ENCODE measurements at regions of chr6 and their contacts with region 1.

Region 1: GRCh38 chr6:105793130-105793529 is 293.0 kb upstream of the PRDM1 start:
- DNase-seq: peak; percentile 79 to 85 (median 80)
- H3K4me3 ChIP-seq: peak overlapping the region in 1 of 3 experiments; percentile 35
- H3K4me3 Mint-ChIP-seq: peak overlapping the region in 1 of 2 donors; percentile 70
- H3K27ac ChIP-seq: peak overlapping the region in 1 of 2 donors; percentile 66
- H3K27ac Mint-ChIP-seq: peak overlapping the region; percentile 34 to 89 (median 82)
- H3K4me1 ChIP-seq: peaks cover 43 to 49% of the 10 kb centered on the region in 2 donors
- H3K4me1 Mint-ChIP-seq: peaks cover 57% of the 10 kb centered on the region
- H3K27me3 ChIP-seq: no peaks in the 10 kb centered on the region
- H3K27me3 Mint-ChIP-seq: no peaks in the 10 kb centered on the region
- CTCF ChIP-seq: peak; percentile 72

Region 2: DNA sequence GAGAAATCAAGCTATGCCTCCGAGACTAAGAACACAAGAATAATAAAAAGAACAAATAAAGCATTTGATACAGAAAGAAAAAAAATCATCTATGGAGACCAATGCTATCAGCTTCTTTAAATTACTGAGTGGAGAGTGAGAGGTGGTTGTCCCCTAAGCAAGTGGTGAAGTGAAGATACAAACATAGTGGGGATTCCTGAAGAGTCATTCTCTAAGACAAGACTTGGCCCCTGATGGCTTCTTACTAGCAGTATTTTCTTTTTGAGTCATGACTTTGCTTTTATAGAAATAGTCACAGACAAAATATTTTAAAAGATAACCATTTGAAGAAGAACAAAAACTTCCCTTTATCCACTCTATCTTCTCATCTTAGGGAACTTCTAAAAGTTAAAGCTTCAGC is 31.6 kb after region 1 on chr6:
- intact Hi-C with region 1: no loop called
- DNase-seq: peak in 1 of 3 donors; percentile 31
- H3K4me3 ChIP-seq: no peak overlapping the region
- H3K4me3 Mint-ChIP-seq: no peak overlapping the region
- H3K27ac ChIP-seq: no peak overlapping the region
- H3K27ac Mint-ChIP-seq: peak overlapping the region in 4 of 7 donors; percentile 32 to 85 (median 58)
- H3K4me1 ChIP-seq: peaks cover 11 to 15% of the 10 kb centered on the region in 2 donors
- H3K4me1 Mint-ChIP-seq: peaks cover 12% of the 10 kb centered on the region
- H3K27me3 ChIP-seq: no peaks in the 10 kb centered on the region
- H3K27me3 Mint-ChIP-seq: no peaks in the 10 kb centered on the region
- CTCF ChIP-seq: no peak

Region 3: DNA sequence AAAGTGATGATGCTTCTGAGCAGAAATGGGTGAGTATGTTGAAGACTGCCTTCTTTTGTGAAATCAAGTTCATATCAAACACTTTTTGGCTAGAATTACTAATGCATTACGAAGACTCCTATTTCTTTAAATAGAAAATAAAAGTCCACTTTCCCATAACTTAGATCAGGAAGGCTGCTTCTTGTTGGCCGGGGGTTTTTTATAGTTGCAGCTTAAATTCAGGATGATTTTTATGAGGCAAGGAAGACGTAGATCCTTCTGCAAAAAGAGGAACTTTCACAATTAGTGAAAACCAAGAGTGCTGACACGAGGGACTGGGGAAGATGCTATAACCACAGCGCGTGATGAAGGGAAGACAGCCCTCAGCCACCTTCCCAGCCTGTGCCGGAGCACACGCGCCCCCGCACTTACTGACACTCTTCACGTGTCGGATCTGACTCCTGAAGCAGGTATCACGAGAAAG is 86.9 kb after region 1 on chr6:
- intact Hi-C with region 1: loop called in 1 of 2 experiments (anchors 5 kb)
- DNase-seq: peak; percentile 95 to 98 (median 96)
- H3K4me3 ChIP-seq: peak overlapping the region in 1 of 3 experiments; percentile 34
- H3K4me3 Mint-ChIP-seq: peak overlapping the region; percentile 54 to 75
- H3K27ac ChIP-seq: peak overlapping the region; percentile 75 to 95
- H3K27ac Mint-ChIP-seq: peak overlapping the region; percentile 90 to 99 (median 97)
- H3K4me1 ChIP-seq: peaks cover 49 to 59% of the 10 kb centered on the region in 2 donors
- H3K4me1 Mint-ChIP-seq: peaks cover 68% of the 10 kb centered on the region
- H3K27me3 ChIP-seq: no peaks in the 10 kb centered on the region
- H3K27me3 Mint-ChIP-seq: peaks cover 0 to 9% (median 0%) of the 10 kb centered on the region in 3 donors
- CTCF ChIP-seq: no peak

Region 4: DNA sequence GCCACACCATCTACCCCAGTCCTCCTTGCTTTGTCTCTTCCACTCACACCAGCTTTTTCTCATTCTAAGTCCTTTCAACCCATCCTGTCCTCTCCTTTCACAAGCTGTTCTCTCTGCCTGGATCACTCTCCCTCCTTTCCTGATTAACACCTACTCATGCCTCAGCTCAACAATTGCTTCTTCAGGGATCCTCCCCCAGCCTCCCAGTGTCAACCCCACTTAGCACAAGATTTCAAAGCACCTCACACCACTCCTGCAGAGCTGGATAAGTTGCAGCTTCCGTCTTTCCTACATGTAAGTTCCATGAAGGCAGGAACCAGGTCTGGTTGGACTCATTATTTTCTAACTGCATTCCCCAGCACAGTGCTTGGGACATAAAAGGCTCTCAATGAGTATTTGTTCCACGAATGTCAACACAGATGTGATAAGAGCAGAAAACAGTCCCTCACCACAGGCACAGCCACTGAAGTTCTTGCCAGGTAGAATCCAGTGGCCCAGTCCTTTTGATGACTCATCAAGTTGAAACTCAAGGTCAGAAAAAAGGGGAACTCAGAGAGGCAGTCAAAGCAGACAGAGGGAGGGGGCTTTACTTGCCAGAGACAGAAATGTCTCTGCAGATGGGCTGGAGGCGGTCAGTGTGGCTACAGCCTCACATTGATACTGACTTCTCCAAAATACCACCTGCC is 99.6 kb after region 1 on chr6:
- intact Hi-C with region 1: loop called in 1 of 2 experiments (anchors 10 kb)
- DNase-seq: peak; percentile 72 to 88 (median 80)
- H3K4me3 ChIP-seq: no peak overlapping the region
- H3K4me3 Mint-ChIP-seq: no peak overlapping the region
- H3K27ac ChIP-seq: no peak overlapping the region
- H3K27ac Mint-ChIP-seq: peak overlapping the region; percentile 1 to 77 (median 41)
- H3K4me1 ChIP-seq: peaks cover 12 to 14% of the 10 kb centered on the region in 2 donors
- H3K4me1 Mint-ChIP-seq: peaks cover 25% of the 10 kb centered on the region
- H3K27me3 ChIP-seq: no peaks in the 10 kb centered on the region
- H3K27me3 Mint-ChIP-seq: peaks cover 0 to 3% (median 0%) of the 10 kb centered on the region in 3 donors
- CTCF ChIP-seq: no peak

Region 5: DNA sequence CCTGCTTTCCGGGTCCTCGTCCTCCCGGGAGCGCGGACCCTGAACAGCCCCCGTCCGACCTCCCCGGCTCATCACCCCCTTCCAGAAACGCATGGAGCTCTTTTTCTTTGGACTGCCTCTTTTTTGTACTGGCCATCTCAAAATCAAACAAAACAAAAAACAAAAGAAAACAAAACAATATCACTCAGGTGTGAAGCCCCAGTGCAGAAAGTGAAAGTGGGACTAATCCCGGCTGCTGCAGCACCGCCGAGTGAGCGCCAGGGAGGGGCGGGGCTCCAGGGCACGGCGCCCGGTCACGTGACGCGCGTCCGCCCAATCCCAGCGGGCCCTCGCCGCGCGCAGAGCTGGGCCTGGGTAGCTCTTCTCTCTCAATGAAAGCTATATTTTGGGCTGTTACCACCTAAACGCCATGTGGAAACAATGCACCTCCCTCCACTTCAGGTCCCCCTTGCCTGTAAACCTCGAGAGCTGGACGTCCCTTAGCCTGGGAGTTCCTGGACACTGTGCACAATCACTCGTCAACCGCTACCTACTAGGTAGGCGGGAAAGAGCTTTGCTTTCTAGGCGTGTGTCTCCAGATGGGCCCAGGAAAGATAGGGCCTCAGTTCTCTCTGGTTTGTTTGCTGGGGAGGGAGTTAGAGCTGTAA is 199.3 kb after region 1 on chr6:
- intact Hi-C with region 1: loop called (anchors 5 to 10 kb)
- DNase-seq: peak; percentile 76 to 88 (median 85)
- H3K4me3 ChIP-seq: peak overlapping the region; percentile 81 to 94 (median 93)
- H3K4me3 Mint-ChIP-seq: peak overlapping the region; percentile 93 to 99
- H3K27ac ChIP-seq: peak overlapping the region in 1 of 2 donors; percentile 79
- H3K27ac Mint-ChIP-seq: peak overlapping the region; percentile 36 to 93 (median 86)
- H3K4me1 ChIP-seq: peaks cover 30 to 40% of the 10 kb centered on the region in 2 donors
- H3K4me1 Mint-ChIP-seq: peaks cover 31% of the 10 kb centered on the region
- H3K27me3 ChIP-seq: peaks cover 56 to 79% of the 10 kb centered on the region in 2 donors
- H3K27me3 Mint-ChIP-seq: peaks cover 70 to 75% (median 72%) of the 10 kb centered on the region in 3 donors
- CTCF ChIP-seq: no peak

Region 6: DNA sequence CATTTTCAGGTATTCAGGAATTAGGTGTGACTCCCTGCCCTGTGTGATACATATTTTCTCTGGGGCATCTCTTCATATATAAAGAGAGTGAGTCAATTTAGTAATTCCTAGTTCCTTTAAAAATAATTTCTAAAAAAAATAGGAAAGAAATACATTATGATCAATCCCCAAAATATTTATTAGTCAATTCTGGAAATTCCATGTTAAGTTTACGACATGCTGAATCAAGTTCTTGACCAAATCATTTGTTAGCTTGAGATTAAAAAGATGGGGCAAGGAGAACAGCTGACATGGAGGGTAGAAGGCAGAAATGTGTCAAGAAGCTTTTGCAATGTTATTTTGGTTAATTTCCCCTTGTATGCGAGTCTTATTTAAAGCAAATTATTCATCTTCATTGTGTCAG is 270.3 kb after region 1 on chr6:
- intact Hi-C with region 1: no loop called
- DNase-seq: peak in 1 of 3 donors; percentile 30
- H3K4me3 ChIP-seq: no peak overlapping the region
- H3K4me3 Mint-ChIP-seq: no peak overlapping the region
- H3K27ac ChIP-seq: no peak overlapping the region
- H3K27ac Mint-ChIP-seq: no peak overlapping the region
- H3K4me1 ChIP-seq: no peaks in the 10 kb centered on the region
- H3K4me1 Mint-ChIP-seq: no peaks in the 10 kb centered on the region
- H3K27me3 ChIP-seq: no peaks in the 10 kb centered on the region
- H3K27me3 Mint-ChIP-seq: peaks cover 0 to under 1% (median 0%) of the 10 kb centered on the region in 3 donors
- CTCF ChIP-seq: no peak

Region 7: DNA sequence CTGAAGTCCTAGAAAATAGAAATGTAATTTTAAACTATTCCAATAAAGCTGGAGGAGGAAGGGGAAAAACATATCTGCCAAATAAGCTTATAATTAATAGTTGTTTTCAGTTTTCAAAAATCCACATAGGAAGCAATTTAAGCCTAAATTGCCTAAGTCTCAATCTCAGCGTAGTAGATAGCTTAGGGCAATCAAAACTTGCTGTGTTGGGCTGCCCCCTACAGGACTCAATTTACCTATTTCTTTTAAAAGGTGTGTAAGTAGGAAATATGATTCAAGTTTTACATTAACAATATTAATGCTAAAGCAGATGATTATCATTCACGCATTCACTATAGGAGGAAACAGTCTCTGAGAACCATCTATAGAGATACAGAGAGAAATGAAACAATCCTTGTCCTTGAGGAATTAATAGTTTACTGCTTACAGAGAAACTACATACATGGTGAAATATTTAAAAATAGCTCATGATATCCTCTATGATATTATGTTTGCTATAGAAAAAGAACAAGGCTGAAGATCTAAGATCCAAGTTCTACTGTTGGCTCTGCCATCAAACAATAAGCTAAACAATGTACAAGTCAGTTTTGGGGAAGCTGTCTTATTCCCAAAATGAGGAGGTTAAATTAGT is 430.3 kb after region 1 on chr6:
- intact Hi-C with region 1: loop called in 1 of 2 experiments (anchors 5 kb)
- DNase-seq: peak; percentile 58 to 85 (median 73)
- H3K4me3 ChIP-seq: no peak overlapping the region
- H3K4me3 Mint-ChIP-seq: no peak overlapping the region
- H3K27ac ChIP-seq: no peak overlapping the region
- H3K27ac Mint-ChIP-seq: no peak overlapping the region
- H3K4me1 ChIP-seq: peaks cover 5 to 6% of the 10 kb centered on the region in 2 donors
- H3K4me1 Mint-ChIP-seq: peaks cover 9% of the 10 kb centered on the region
- H3K27me3 ChIP-seq: no peaks in the 10 kb centered on the region
- H3K27me3 Mint-ChIP-seq: no peaks in the 10 kb centered on the region
- CTCF ChIP-seq: peak; percentile 84

Measured in CD14-positive monocyte (primary cell).